Activated CD4-positive, alpha-beta T cell treated with anti-CD3 and anti-CD28 coated beads, Interleukin-2, amount 10 ng/mL, durations not matched to agents 7 days and 5 days (primary cell): ENCODE measurements at regions of chr4 and their contacts with region 1.

Region 1: GRCh38 chr4:10671366-10671765 is 13.2 kb downstream of the CLNK start:
- DNase-seq: peak; percentile 75
- H3K4me3 Mint-ChIP-seq: no peak overlapping the region
- H3K27ac Mint-ChIP-seq: peak overlapping the region; percentile 89
- H3K4me1 Mint-ChIP-seq: peaks cover 43% of the 10 kb centered on the region
- H3K27me3 Mint-ChIP-seq: no peaks in the 10 kb centered on the region

Region 2: DNA sequence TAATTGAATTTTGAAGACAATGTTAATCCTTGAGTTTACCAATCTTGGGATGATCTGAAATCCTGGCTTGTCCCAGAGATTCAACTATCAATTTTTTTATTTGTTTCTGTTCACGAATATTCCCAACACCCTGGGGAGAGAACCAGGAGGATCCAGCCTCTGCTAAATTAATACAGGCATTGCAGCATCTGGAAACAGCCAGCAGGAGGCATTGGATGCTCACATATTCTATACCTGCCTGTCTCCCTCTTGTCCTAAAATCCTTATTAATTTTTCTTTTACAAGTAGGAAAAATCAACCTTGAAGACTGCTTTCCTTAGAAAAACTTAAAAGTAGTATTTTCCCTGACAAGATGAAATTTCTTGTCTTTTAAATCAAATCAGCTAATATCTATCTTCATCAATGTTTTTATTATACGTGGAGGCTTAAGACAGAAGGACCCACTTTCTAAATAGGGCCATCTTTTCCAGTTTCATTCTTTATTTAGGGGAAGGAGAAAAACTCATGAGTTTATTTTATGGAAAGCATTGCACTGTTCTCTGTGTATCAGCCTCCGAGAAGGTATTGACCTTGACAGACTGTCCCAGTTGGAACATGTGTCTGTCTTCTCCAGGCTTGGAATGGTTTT is 89.2 kb before region 1 on chr4:
- CTCF ChIA-PET with region 1: no interaction called
- POLR2A ChIA-PET with region 1: no interaction called
- DNase-seq: peak; percentile 30
- H3K4me3 Mint-ChIP-seq: no peak overlapping the region
- H3K27ac Mint-ChIP-seq: no peak overlapping the region
- H3K4me1 Mint-ChIP-seq: peaks cover 15% of the 10 kb centered on the region
- H3K27me3 Mint-ChIP-seq: no peaks in the 10 kb centered on the region

Region 3: GRCh38 chr4:11484531-11484930 is 813.2 kb after region 1 on chr4:
- CTCF ChIA-PET with region 1: no interaction called
- POLR2A ChIA-PET with region 1: interaction called, 11 read pairs
- DNase-seq: no peak
- H3K4me3 Mint-ChIP-seq: no peak overlapping the region
- H3K27ac Mint-ChIP-seq: no peak overlapping the region
- H3K4me1 Mint-ChIP-seq: peaks cover 42% of the 10 kb centered on the region
- H3K27me3 Mint-ChIP-seq: no peaks in the 10 kb centered on the region